Sigmoid colon (tissue), 7 donors: ENCODE measurements at regions of chr20 and their contacts with region 1.

Region 1: GRCh38 chr20:1619861-1620444 is at the start of gene SIRPB1:
- DNase-seq: no peak
- H3K4me3 ChIP-seq: no peak within 1 kb of the TSS
- H3K27ac ChIP-seq: no peak within 1 kb of the TSS
- H3K4me1 ChIP-seq: no peaks in the 10 kb centered on the region
- H3K27me3 ChIP-seq: no peaks in the 10 kb centered on the region
- CTCF ChIP-seq: no peak
- EP300 ChIP-seq: no peak
- POLR2A ChIP-seq: no peak
- total RNA-seq, gene SIRPB1: 0.36 to 5.2 (median 2.8) TPM

Region 2: GRCh38 chr20:1130847-1131246 is 489.1 kb before region 1 on chr20:
- intact Hi-C with region 1: no loop called
- DNase-seq: no peak
- H3K4me3 ChIP-seq: no peak overlapping the region
- H3K27ac ChIP-seq: no peak overlapping the region
- H3K4me1 ChIP-seq: no peaks in the 10 kb centered on the region
- H3K27me3 ChIP-seq: no peaks in the 10 kb centered on the region
- CTCF ChIP-seq: no peak
- EP300 ChIP-seq: no peak
- POLR2A ChIP-seq: no peak

Region 3: GRCh38 chr20:1577906-1578305 is 42.0 kb before region 1 on chr20:
- intact Hi-C with region 1: loop called (anchors 2 kb)
- DNase-seq: no peak
- H3K4me3 ChIP-seq: no peak overlapping the region
- H3K27ac ChIP-seq: no peak overlapping the region
- H3K4me1 ChIP-seq: no peaks in the 10 kb centered on the region
- H3K27me3 ChIP-seq: no peaks in the 10 kb centered on the region
- CTCF ChIP-seq: no peak
- EP300 ChIP-seq: no peak
- POLR2A ChIP-seq: no peak